ENCODE measurements at regions of chr16 and their contacts with region 1.

Region 1: GRCh38 chr16:714558-715476 is at the start of gene METRN:
- DNase-seq: peak; percentile 95
- ATAC-seq: peak; percentile 85
- H3K4me3 Mint-ChIP-seq: peak within 1 kb of the TSS; percentile 56
- H3K27ac Mint-ChIP-seq: no peak within 1 kb of the TSS
- H3K4me1 Mint-ChIP-seq: peaks cover 8% of the 10 kb centered on the region
- H3K27me3 Mint-ChIP-seq: peaks cover 14% of the 10 kb centered on the region
- total RNA-seq, gene METRN: 11.1 to 13.3 TPM

Region 2: DNA sequence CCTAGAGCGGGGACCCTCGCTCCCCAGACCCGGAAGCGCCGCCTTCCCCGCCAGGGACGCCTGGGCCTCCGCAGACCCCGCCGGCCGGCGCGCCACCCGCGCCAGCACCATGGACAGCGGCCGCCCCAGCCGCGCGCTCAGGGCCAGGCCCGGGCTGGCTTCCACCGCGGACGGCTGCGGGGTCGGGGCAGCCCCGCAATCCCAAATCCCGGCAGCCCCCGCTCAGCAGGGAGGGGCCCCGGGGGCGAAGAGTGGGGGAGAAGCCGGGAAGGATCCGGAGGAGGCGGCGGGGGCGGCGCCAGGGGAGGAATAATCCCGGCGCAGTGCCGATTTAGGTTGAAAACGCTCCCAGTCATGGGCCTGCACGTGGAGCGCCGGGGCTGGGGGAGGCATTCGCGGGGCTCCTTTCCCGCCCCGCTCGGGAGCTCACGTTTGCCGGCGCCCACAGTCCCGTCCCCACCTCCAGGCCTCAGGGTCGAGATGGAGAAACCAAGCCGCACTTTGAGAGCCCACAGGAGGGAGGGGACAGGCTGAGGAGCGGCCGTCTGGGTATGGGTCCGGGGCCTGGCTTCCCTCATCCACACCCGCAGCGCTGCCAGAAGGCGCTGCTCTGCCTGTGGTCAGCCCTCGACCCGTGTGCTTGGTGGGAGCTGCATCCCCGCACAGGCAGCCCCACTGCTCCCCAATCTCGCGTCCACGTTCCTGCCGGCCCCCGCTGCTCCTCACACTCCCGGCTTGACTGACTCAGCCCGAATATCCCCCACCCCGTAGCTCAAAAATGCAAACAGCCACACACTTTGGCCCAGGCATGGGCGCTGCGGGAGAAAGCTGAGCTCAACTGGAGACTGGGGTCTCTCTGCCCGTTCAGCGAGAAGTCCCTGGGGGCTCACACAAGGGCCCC is 13.9 kb before region 1 on chr16:
- CTCF ChIA-PET with region 1: interaction called, 11 read pairs
- POLR2A ChIA-PET with region 1: no interaction called
- intact Hi-C with region 1: no loop called
- DNase-seq: peak; percentile 60
- ATAC-seq: peak; percentile 51
- H3K4me3 Mint-ChIP-seq: no peak overlapping the region
- H3K27ac Mint-ChIP-seq: no peak overlapping the region
- H3K4me1 Mint-ChIP-seq: peaks cover 2% of the 10 kb centered on the region
- H3K27me3 Mint-ChIP-seq: peaks cover 14% of the 10 kb centered on the region

Region 3: GRCh38 chr16:733382-734207 is 18.8 kb after region 1 on chr16:
- CTCF ChIA-PET with region 1: interaction called, 15 read pairs
- POLR2A ChIA-PET with region 1: no interaction called
- intact Hi-C with region 1: loop called in 1 of 2 experiments (anchors 1 kb)
- DNase-seq: peak; percentile 57
- ATAC-seq: no peak
- H3K4me3 Mint-ChIP-seq: no peak overlapping the region
- H3K27ac Mint-ChIP-seq: no peak overlapping the region
- H3K4me1 Mint-ChIP-seq: peaks cover 20% of the 10 kb centered on the region
- H3K27me3 Mint-ChIP-seq: no peaks in the 10 kb centered on the region

Region 4: GRCh38 chr16:991350-992256 is 276.8 kb after region 1 on chr16:
- CTCF ChIA-PET with region 1: no interaction called
- POLR2A ChIA-PET with region 1: no interaction called
- intact Hi-C with region 1: no loop called
- DNase-seq: no peak
- ATAC-seq: no peak
- H3K4me3 Mint-ChIP-seq: no peak overlapping the region
- H3K27ac Mint-ChIP-seq: no peak overlapping the region
- H3K4me1 Mint-ChIP-seq: peaks cover 20% of the 10 kb centered on the region
- H3K27me3 Mint-ChIP-seq: peaks cover 2% of the 10 kb centered on the region

Region 5: GRCh38 chr16:1054660-1055556 is 340.1 kb after region 1 on chr16:
- CTCF ChIA-PET with region 1: no interaction called
- POLR2A ChIA-PET with region 1: no interaction called
- intact Hi-C with region 1: loop called in 1 of 2 experiments (anchors 2 kb)
- DNase-seq: peak; percentile 65
- ATAC-seq: peak; percentile 59
- H3K4me3 Mint-ChIP-seq: no peak overlapping the region
- H3K27ac Mint-ChIP-seq: no peak overlapping the region
- H3K4me1 Mint-ChIP-seq: no peaks in the 10 kb centered on the region
- H3K27me3 Mint-ChIP-seq: peaks cover 3% of the 10 kb centered on the region

Region 6: DNA sequence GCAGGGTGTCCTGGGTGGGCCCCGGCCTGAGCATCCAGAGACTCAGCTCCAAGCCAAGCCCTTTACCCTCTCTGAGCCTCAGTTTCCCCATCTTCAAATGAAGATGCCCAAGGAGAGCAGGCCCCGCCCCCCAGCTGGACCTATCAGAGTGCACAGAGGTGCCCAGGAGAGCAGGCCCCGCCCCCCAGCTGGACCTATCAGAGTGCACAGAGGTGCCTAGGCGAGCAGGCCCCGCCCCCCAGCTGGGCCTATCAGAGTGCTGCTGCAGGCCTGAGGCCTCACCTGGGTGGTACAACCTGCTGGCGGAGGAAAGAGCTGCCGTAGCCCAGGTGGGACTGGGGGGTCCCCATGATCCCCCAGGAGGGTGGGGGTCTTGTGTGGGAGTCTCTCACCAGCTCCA is 354.3 kb after region 1 on chr16:
- CTCF ChIA-PET with region 1: no interaction called
- POLR2A ChIA-PET with region 1: no interaction called
- intact Hi-C with region 1: no loop called
- DNase-seq: peak; percentile 39
- ATAC-seq: peak; percentile 57
- H3K4me3 Mint-ChIP-seq: no peak overlapping the region
- H3K27ac Mint-ChIP-seq: no peak overlapping the region
- H3K4me1 Mint-ChIP-seq: no peaks in the 10 kb centered on the region
- H3K27me3 Mint-ChIP-seq: peaks cover 27% of the 10 kb centered on the region

Region 7: DNA sequence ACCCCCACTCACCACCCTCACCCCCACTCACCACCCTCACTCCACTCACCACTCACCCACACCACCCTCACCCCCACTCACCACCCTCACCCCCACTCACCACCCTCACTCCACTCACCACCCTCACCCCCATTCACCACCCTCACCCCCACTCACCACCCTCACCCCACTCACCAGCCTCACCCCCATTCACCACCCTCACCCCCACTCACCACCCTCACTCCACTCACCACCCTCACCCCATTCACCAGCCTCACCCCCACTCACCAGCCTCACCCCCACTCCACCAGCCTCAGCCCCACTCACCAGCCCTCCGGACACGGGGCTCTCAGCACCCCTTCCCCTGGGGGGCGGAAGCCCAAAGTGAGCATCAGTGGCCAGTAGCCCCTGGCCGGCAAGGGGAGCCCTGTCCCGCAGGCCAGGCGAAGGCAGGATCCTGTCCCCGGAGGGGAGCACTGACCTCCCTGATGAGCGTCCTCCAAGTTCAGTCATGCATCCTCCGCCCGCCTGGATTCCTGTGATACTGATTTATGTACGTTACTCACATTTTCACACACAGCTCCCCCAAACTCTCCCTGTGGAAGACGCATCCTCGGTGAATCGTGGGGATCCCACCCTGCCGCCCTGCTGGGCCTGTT is 399.2 kb after region 1 on chr16:
- CTCF ChIA-PET with region 1: no interaction called
- POLR2A ChIA-PET with region 1: no interaction called
- intact Hi-C with region 1: no loop called
- DNase-seq: no peak
- ATAC-seq: no peak
- H3K4me3 Mint-ChIP-seq: no peak overlapping the region
- H3K27ac Mint-ChIP-seq: no peak overlapping the region
- H3K4me1 Mint-ChIP-seq: no peaks in the 10 kb centered on the region
- H3K27me3 Mint-ChIP-seq: peaks cover 2% of the 10 kb centered on the region

Measured in activated CD4-positive, alpha-beta T cell treated with anti-CD3 and anti-CD28 coated beads for 36 hours (primary cell).